K562 (cell line): ENCODE measurements at regions of chr10 and their contacts with region 1.

Region 1: GRCh38 chr10:100373298-100374136 is 26.5 kb downstream of the SCD start:
- DNase-seq: peak; percentile 91 to 97 (median 94)
- ATAC-seq: peak; percentile 88
- H3K4me3 ChIP-seq: peak overlapping the region; percentile 62
- H3K27ac ChIP-seq: peak overlapping the region; percentile 100
- H3K4me1 ChIP-seq: peaks cover 25% of the 10 kb centered on the region in 2 experiments
- H3K27me3 ChIP-seq: no peaks in the 10 kb centered on the region
- CTCF ChIP-seq: no peak
- EP300 ChIP-seq: peak; percentile 85
- POLR2A ChIP-seq: peak; percentile 88
- RAD21 ChIP-seq: 0 out of 4 replicates have a peak, but pooled peaks of 1 of the 2 experiments have one; percentile 4

Region 2: DNA sequence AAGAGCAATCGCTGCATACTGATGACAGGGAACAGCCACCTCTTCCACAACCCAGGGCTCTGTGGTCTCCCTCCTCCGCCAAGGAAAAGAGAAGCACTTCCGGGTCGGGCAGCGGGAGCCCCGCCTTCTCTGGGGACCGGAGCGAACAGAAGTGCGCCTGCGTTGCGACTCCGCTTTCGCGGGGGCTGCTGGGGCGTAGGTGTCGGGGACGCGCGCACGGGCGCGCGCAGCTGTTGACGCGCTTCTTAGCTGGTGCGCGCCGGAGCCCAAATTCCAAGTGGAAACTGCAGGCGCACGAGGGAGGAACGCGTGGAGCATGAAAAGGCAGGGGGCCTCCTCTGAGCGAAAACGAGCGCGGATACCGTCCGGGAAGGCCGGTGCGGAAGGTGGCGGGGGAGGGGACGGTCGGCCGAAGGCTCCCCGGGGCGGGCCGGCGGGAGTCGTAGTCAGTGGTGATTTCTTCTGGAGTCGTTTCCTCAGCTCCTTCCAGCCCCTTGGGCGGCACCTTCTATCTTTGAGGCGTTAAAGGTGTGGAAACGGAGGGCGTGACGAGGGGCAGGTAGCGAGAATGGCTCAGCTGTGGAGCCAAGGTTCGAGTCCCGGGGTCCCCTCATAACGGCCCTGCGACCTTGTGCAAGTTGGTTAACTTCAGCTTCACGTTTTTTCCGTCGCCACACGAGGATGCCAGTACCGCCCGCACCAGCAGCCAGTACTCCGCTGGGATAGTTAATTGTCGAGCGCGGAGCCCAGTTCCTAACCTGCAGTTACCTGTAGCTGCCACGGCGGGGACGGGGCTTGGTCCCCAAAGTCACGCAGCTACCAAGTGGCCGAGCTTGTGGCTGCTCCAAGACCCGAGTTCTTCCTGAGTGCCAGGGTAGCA is 641.2 kb before region 1 on chr10 and contains the starts of genes COX15 and CUTC:
- CTCF ChIA-PET with region 1: no interaction called
- POLR2A ChIA-PET with region 1: no interaction called
- in situ Hi-C with region 1: no loop called
- intact Hi-C with region 1: no loop called
- DNase-seq: peak; percentile 90 to 96 (median 92)
- ATAC-seq: peak; percentile 95
- H3K4me3 ChIP-seq: peak within 1 kb of the TSS; percentile 82
- H3K27ac ChIP-seq: peak within 1 kb of the TSS; percentile 89
- H3K4me1 ChIP-seq: no peaks in the 10 kb centered on the region; a peak in 2 of 5 replicates
- H3K27me3 ChIP-seq: no peaks in the 10 kb centered on the region
- CTCF ChIP-seq: peak; percentile 18 to 36 (median 31); a peak in 4 of 6 replicates
- EP300 ChIP-seq: no peak
- POLR2A ChIP-seq: peak; percentile 90
- RAD21 ChIP-seq: no peak
- polyA plus RNA-seq, gene COX15: 44.4 to 45.1 TPM
- polyA plus RNA-seq, gene CUTC: 47.5 to 69.3 TPM

Region 3: GRCh38 chr10:100359529-100360150 is 13.9 kb before region 1 on chr10:
- CTCF ChIA-PET with region 1: no interaction called
- POLR2A ChIA-PET with region 1: interaction called, 50 read pairs
- in situ Hi-C with region 1: no loop called
- intact Hi-C with region 1: loop called (anchors 2 kb)
- DNase-seq: peak in 1 of 4 experiments; percentile 17
- ATAC-seq: no peak
- H3K4me3 ChIP-seq: no peak overlapping the region
- H3K27ac ChIP-seq: peak overlapping the region; percentile 59
- H3K4me1 ChIP-seq: peaks cover 17 to 24% of the 10 kb centered on the region in 2 experiments
- H3K27me3 ChIP-seq: no peaks in the 10 kb centered on the region
- CTCF ChIP-seq: no peak
- EP300 ChIP-seq: no peak
- POLR2A ChIP-seq: 0 out of 2 replicates have a peak, but pooled peaks have one; percentile 0
- RAD21 ChIP-seq: no peak